ENCODE measurements at regions of chr12 and their contacts with region 1.

Region 1: GRCh38 chr12:120580787-120581723 is at the start of gene POP5:
- DNase-seq: peak; percentile 99
- H3K4me3 Mint-ChIP-seq: peak within 1 kb of the TSS; percentile 96
- H3K27ac Mint-ChIP-seq: peak within 1 kb of the TSS; percentile 85
- H3K4me1 Mint-ChIP-seq: peaks cover 31% of the 10 kb centered on the region
- H3K27me3 Mint-ChIP-seq: peaks cover 19% of the 10 kb centered on the region
- total RNA-seq, gene POP5: 74.0 and 76.0 TPM in 2 replicates

Region 2: GRCh38 chr12:119911182-119911581 is 669.9 kb before region 1 on chr12:
- intact Hi-C with region 1: no loop called
- DNase-seq: no peak
- H3K4me3 Mint-ChIP-seq: no peak overlapping the region
- H3K27ac Mint-ChIP-seq: no peak overlapping the region
- H3K4me1 Mint-ChIP-seq: no peaks in the 10 kb centered on the region
- H3K27me3 Mint-ChIP-seq: peaks cover 9% of the 10 kb centered on the region

Region 3: DNA sequence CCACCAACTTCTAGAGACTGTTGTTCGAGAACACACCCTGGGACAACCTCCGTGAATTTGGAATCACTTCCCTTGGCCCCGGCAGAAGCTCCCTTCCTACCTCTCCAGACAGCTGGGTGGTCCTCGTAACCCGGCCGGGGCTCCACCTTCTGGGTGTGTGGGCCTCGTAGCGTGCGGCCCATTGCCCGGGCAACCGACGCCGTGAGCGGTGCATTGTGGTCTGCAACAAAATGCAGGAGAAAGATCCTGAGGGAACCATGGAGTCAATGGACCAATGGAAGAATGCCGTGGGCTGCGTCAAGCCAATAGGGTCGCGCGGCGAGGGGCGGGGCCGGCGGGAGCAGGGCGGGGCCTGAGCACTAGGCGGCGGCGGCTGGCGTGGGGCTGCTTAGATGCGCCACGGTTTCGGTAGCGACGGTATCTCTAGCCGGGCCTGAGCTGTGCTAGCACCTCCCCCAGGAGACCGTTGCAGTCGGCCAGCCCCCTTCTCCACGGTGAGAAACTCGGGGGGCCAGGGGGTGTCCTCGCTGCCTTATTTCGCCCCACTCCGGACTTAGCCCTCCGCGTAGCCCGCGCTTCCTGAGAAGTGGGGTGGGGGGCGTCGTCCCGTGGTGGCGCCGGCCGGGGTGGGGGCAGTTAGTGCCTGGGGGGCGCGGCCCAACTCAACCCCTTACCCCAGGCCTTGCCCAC is 85.2 kb before region 1 on chr12 and contains the start of gene DYNLL1:
- intact Hi-C with region 1: loop called (anchors 2 kb)
- DNase-seq: peak; percentile 100
- H3K4me3 Mint-ChIP-seq: peak within 1 kb of the TSS; percentile 94
- H3K27ac Mint-ChIP-seq: peak within 1 kb of the TSS; percentile 82
- H3K4me1 Mint-ChIP-seq: peaks cover 31% of the 10 kb centered on the region
- H3K27me3 Mint-ChIP-seq: no peaks in the 10 kb centered on the region
- total RNA-seq, gene DYNLL1: 330 and 351 TPM in 2 replicates

Region 4: DNA sequence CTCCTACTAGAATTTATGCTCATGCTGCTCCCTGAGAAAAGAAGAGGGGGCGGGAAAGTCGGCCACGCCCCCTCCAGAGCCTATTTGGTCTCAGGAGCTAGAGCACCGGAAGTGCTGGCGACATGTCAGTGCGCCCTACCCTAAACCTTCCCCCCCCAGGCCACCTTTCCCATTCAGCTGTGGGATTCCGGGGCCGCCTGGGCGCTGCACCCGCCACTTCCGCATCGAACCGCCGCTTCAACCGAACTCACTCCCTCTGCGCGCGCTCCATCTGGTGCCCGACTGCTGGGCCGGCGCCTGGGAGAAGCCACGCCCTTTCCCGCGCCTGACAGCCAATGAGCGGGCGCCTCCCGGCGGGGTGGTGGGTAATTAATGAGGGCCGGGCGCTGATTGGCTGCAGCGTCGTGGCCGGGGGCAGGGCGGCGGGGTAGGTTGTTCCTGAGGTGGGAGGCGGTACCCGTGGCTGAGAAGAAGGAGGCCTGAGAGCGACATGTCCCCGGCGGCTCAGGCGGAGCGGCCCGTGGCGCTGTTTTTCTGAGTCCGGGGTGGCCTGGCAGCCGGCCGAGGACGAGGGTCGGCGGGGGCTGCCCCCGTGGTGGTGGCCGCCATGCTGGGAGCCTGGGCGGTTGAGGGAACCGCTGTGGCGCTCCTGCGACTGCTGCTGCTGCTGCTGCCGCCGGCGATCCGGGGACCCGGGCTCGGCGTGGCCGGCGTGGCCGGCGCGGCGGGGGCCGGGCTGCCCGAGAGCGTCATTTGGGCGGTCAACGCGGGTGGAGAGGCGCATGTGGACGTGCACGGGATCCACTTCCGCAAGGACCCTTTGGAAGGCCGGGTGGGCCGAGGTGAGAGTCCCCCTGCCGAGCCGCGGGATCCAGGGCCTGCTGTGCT is 105.9 kb after region 1 on chr12 and contains the start of gene MLEC:
- intact Hi-C with region 1: loop called (anchors 1 kb)
- DNase-seq: peak; percentile 100
- H3K4me3 Mint-ChIP-seq: peak within 1 kb of the TSS; percentile 92
- H3K27ac Mint-ChIP-seq: peak within 1 kb of the TSS; percentile 96
- H3K4me1 Mint-ChIP-seq: peaks cover 53% of the 10 kb centered on the region
- H3K27me3 Mint-ChIP-seq: peaks cover 2% of the 10 kb centered on the region
- total RNA-seq, gene MLEC: 131 and 149 TPM in 2 replicates

Region 5: DNA sequence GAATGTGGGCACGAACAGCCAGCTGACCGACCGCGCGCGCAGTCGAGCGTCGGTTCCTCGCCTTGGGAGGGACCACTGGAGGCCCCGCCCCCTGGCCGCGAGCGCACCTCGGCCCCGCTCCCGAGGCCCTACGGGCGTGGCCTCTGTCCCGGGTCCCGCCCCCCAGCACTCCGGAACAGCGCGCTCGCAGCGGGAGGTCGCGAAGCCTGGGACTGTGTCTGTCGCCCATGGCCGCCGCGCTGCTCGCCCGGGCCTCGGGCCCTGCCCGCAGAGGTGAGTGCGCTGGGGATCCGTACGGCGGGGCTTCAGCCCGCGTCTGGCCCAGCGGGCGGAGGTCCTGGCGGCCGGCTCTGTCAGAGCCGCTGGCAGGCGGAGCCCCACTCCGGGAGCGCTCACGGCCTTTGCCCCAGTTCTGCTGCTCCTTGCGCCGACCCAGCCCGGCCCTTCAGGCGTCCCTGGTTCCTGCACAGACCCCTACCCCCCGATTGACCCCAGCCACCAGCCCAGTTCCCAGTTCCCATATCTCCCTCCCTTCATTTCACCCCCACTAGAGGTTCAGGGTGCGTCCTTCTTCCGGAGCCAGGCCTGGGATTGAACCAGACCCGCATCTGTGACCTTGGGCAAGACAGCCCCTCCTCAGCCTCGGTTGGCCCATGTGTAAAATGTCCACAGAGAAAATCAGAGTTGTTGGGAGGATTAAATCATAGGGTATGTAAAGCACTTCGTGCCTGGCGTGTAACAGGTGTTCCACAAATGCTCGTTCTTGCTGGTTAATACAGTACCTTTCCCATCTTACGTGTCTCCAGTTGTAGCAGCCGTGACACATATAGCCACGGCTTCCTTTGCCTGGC is 144.8 kb after region 1 on chr12 and contains the start of gene ACADS:
- intact Hi-C with region 1: loop called (anchors 5 kb)
- DNase-seq: peak; percentile 98
- H3K4me3 Mint-ChIP-seq: peak within 1 kb of the TSS; percentile 97
- H3K27ac Mint-ChIP-seq: peak within 1 kb of the TSS; percentile 88
- H3K4me1 Mint-ChIP-seq: peaks cover 18% of the 10 kb centered on the region
- H3K27me3 Mint-ChIP-seq: no peaks in the 10 kb centered on the region
- total RNA-seq, gene ACADS: 11.7 and 12.8 TPM in 2 replicates

Region 6: GRCh38 chr12:120748242-120748641 is 167.2 kb after region 1 on chr12:
- intact Hi-C with region 1: no loop called
- DNase-seq: no peak
- H3K4me3 Mint-ChIP-seq: no peak overlapping the region
- H3K27ac Mint-ChIP-seq: no peak overlapping the region
- H3K4me1 Mint-ChIP-seq: peaks cover 2% of the 10 kb centered on the region
- H3K27me3 Mint-ChIP-seq: peaks cover 3% of the 10 kb centered on the region

Region 7: GRCh38 chr12:121223292-121224285 is 642.5 kb after region 1 on chr12:
- intact Hi-C with region 1: loop called (anchors 5 kb)
- DNase-seq: peak; percentile 84
- H3K4me3 Mint-ChIP-seq: peak overlapping the region; percentile 52
- H3K27ac Mint-ChIP-seq: peak overlapping the region; percentile 88
- H3K4me1 Mint-ChIP-seq: peaks cover 43% of the 10 kb centered on the region
- H3K27me3 Mint-ChIP-seq: no peaks in the 10 kb centered on the region

Measured in activated CD4-positive, alpha-beta T cell treated with anti-CD3 and anti-CD28 coated beads, Interleukin-2, amount 10 ng/mL, durations not matched to agents 24 days and 14 days (primary cell).